Dorsolateral prefrontal cortex (tissue), 120 donors: ENCODE measurements at regions of chr1 and their contacts with region 1.

Region 1: DNA sequence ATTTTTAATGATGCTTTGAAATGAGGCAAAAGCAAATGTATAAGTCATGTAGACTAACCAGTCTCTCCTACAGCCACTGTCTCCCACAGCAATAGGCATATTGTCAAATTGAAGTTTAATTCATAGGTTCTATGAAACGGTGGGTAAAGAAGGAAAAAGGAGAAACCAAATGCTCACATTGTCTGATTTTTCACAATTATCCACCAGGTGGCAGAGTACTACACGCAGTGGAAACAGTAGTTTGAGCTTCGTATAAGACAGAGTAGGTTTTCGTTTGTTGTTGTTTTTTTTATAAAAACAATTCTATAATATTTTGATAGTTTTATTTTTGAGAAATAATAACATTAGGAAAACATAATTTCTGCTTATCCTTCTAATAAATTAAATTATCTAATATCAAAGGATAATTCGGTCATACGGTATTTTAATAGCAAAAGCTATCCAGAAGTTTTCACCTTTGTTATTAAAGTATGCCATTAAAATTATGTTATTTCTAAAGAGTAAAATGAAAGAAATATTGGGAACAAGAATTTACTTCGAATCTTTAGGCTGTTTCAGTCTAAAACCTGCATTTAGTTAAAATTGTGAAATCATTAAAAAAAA is 39.1 kb downstream of the TYW3 start:
- DNase-seq: peak in 2 of 10 donors; percentile 4 to 14
- H3K4me3 ChIP-seq: peak overlapping the region in 8 of 59 donors; percentile 10 to 27 (median 17)
- H3K27ac ChIP-seq: no peak overlapping the region
- H3K27me3 ChIP-seq: peaks cover 0 to 6% (median 0%) of the 10 kb centered on the region in 45 donors
- CTCF ChIP-seq: peak; percentile 62 to 92 (median 82)

Region 2: DNA sequence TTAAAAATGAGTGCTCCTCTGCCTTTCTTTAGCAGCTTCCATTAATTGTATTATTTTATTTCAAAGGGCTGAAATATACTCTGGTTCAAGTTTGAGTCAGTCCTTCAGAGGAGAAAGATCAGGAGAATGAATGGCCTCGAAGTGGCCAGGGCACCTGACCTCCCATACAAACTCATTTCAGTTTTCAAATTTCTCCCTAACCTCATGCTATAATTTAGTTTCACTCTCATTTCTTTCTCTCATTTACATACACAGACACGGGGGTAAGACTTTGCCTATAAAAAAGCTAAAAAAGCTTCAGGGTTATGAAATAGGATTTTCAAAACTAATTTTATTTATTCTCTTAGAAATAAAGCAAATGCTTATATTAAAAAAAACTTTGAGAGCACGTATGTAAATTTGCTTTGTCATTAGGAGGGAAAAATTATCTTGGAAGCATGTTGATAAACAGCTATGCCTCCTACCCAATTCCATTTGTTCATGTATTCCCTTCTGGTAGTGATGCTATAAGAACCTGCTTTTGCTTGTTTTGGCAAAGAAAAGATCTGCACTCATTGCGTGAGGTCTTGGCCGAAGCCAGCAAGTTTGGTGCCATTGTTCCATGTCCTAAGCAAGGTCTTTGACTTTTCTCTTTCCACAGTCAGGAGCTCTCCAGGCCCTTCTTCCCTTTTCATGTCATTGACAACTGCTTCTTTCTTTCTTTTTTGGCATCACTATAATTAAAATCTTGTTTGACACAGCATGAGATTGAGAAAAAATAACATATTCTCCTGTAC is 179.2 kb before region 1 on chr1:
- intact Hi-C with region 1: no loop called
- DNase-seq: no peak
- H3K4me3 ChIP-seq: no peak overlapping the region
- H3K27ac ChIP-seq: no peak overlapping the region
- H3K27me3 ChIP-seq: no peaks in the 10 kb centered on the region
- CTCF ChIP-seq: no peak

Region 3: DNA sequence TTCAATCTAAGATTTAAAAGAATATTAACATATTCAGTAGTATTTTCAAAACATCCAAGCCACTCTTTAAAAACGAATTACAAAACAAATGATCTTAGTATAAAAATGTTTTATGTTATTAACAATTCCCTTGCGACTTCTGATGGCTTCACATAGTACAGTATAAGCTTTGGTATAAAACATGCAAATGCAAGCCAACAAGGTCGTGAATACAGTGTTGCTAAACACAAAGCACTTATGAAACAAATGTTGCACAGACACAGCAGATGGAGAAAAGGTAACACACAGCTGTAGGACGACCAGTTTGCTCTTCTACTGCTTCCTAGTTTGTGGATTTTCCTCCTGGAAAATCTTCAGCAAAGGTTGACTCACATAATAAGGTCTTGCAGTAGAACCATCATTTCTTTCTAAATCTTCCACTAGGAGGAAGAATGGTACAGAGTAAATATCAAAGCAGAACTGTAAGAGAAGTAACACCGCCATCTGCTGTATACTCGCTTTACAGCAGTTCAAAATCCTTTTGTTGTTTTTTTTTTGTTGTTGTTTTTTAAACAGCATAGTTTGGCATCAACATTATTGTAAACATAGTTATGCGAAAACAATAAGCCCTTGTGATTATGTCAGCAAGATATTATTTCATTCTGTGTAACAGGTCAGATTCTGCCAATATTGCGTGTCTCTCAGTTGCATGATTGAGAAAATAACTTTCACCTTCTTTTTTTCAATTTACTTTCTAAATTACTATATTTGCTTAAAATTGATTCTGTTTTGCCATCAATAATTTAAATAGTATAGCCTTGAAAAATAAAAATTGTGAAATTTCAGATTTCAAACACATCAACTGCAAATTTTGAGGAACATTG is 431.6 kb after region 1 on chr1:
- intact Hi-C with region 1: loop called (anchors 2 to 10 kb)
- DNase-seq: no peak
- H3K4me3 ChIP-seq: no peak overlapping the region
- H3K27ac ChIP-seq: no peak overlapping the region
- H3K27me3 ChIP-seq: peaks cover 0 to 3% (median 0%) of the 10 kb centered on the region in 45 donors
- CTCF ChIP-seq: peak; percentile 54 to 91 (median 76)